ENCODE measurements at regions of chr7 and their contacts with region 1.

Region 1: GRCh38 chr7:129611246-129612111 is at the start of gene NRF1:
- H3K4me3 Mint-ChIP-seq: peak within 1 kb of the TSS; percentile 89
- H3K27ac Mint-ChIP-seq: peak within 1 kb of the TSS; percentile 91
- H3K4me1 Mint-ChIP-seq: peaks cover 60% of the 10 kb centered on the region
- H3K27me3 Mint-ChIP-seq: no peaks in the 10 kb centered on the region

Region 2: DNA sequence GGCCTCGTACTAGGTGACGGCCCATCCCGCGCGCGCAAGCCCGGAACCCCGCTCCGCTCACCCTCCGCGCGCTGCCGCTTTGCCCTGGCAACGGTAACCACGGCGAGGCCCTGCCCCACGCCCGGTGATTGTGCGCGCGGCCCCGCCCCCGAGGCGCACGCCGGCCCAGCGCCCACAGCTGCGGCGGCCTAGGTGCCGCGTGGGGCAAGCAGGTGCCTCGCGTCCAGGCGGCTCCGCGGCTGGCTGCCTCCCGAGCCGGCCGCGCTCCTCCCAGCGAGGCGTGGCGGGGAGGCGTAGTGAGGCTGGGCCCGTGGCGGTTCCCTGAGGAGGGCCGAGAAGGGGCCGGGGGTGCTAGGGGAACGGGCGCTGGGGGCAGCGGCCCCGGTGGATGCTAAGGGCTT is 109.1 kb before region 1 on chr7 and contains the start of gene SMKR1:
- intact Hi-C with region 1: loop called (anchors 10 kb)
- H3K4me3 Mint-ChIP-seq: peak within 1 kb of the TSS; percentile 66
- H3K27ac Mint-ChIP-seq: no peak within 1 kb of the TSS
- H3K4me1 Mint-ChIP-seq: peaks cover 19% of the 10 kb centered on the region
- H3K27me3 Mint-ChIP-seq: peaks cover 50% of the 10 kb centered on the region

Region 3: GRCh38 chr7:129664029-129665012 is 52.8 kb after region 1 on chr7:
- intact Hi-C with region 1: no loop called
- H3K4me3 Mint-ChIP-seq: no peak overlapping the region
- H3K27ac Mint-ChIP-seq: no peak overlapping the region
- H3K4me1 Mint-ChIP-seq: peaks cover 14% of the 10 kb centered on the region
- H3K27me3 Mint-ChIP-seq: no peaks in the 10 kb centered on the region

Region 4: DNA sequence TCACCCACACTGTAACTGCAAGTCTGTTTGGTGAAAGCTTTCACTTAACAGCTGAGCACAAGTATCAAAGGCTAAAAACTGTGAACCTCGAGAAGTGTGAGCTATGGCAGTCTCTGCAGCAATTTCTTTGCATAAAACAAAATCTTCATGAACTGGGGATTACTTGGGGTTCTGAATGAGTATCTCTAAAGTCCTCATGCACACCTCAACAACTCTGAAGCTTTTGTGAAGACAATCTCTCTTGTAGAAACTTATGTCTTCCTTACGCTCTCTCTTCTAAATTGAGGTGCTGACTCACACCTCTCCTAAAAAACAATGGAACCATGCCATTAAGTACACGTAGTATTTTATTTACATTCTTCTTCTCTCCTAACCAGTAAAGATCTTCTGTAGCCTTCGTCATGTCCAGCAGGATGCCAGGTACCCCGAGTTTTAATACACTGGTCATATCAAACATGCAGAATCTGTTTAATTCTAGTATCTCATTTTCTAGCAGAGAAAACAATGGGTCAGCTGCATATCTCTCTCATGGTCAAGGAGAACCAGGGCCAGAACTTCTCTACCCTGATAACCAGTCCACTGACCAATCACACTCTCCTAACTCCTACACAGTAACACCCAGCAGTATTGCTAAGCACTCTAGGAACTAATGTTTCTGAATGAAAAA is 264.4 kb after region 1 on chr7:
- intact Hi-C with region 1: no loop called
- H3K4me3 Mint-ChIP-seq: no peak overlapping the region
- H3K27ac Mint-ChIP-seq: no peak overlapping the region
- H3K4me1 Mint-ChIP-seq: peaks cover 19% of the 10 kb centered on the region
- H3K27me3 Mint-ChIP-seq: no peaks in the 10 kb centered on the region

Region 5: GRCh38 chr7:129952653-129953560 is 341.4 kb after region 1 on chr7 and contains the start of gene UBE2H:
- intact Hi-C with region 1: loop called (anchors 10 kb)
- H3K4me3 Mint-ChIP-seq: no peak within 1 kb of the TSS
- H3K27ac Mint-ChIP-seq: no peak within 1 kb of the TSS
- H3K4me1 Mint-ChIP-seq: no peaks in the 10 kb centered on the region
- H3K27me3 Mint-ChIP-seq: peaks cover 7% of the 10 kb centered on the region

Measured in dendritic cell treated with granulocyte-macrophage colony-stimulating factor and Interleukin-4, amounts not matched to agents 40 ng/mL and 50 ng/mL, for 4 days (primary cell).